Activated CD4-positive, alpha-beta memory T cell treated with anti-CD3 and anti-CD28 coated beads for 36 hours (primary cell): ENCODE measurements at regions of chr11 and their contacts with region 1.

Region 1: GRCh38 chr11:65919146-65920033 is at the start of gene DRAP1:
- DNase-seq: peak; percentile 99
- H3K4me3 Mint-ChIP-seq: peak within 1 kb of the TSS; percentile 90
- H3K27ac Mint-ChIP-seq: peak within 1 kb of the TSS; percentile 84
- H3K4me1 Mint-ChIP-seq: peaks cover 33% of the 10 kb centered on the region
- H3K27me3 Mint-ChIP-seq: no peaks in the 10 kb centered on the region
- total RNA-seq, gene DRAP1: 154 to 169 TPM

Region 2: DNA sequence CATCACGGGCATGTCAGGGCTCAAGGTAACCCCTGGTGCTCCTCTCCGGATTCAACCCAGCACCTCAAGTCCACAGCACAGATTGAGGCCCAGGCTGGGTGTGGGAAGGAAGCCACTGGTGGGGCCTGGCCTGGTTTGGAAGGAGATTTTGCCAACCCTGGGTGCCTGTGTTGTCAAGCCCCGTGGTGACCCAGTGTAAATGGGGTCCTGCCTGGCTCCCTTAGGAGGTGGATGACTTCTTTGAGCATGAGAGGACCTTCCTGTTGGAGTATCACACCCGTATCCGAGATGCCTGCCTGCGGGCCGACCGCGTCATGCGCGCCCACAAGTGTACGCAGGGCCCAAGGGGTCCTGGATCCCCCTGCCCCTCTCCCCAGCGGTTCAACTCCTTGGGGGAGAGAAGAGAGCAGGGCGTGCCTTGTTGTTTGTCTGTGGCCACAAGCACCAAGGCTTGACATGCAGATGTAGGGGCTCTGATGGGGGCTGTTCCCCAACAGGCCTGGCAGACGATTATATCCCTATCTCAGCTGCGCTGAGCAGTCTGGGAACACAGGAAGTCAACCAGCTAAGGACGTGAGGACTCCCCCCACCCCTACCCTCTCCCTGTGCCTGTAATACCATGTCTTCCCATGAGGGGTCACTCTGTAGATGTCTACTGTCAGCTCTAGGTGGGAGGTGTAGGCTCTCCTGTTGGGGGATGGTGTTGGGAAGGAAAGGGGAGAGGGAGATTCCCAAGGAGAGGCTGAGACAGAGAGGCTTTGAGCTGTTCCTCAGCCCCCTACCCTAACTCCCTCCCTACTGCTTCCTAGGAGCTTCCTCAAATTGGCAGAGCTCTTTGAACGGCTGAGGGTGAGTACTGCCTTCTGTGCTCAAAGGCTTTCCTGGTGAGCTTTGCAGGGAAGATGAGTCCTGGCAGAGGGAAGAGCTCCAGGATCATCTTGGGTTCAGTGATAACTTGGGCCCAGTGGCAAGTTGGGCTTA is 68.3 kb before region 1 on chr11:
- CTCF ChIA-PET with region 1: no interaction called
- POLR2A ChIA-PET with region 1: no interaction called
- intact Hi-C with region 1: no loop called
- DNase-seq: peak; percentile 24
- H3K4me3 Mint-ChIP-seq: no peak overlapping the region
- H3K27ac Mint-ChIP-seq: no peak overlapping the region
- H3K4me1 Mint-ChIP-seq: peaks cover 22% of the 10 kb centered on the region
- H3K27me3 Mint-ChIP-seq: no peaks in the 10 kb centered on the region

Region 3: GRCh38 chr11:65900125-65900898 is 19.1 kb before region 1 on chr11 and contains the start of gene FOSL1:
- CTCF ChIA-PET with region 1: interaction called, 3 read pairs
- POLR2A ChIA-PET with region 1: interaction called, 19 read pairs
- intact Hi-C with region 1: loop called (anchors 1 kb)
- DNase-seq: peak; percentile 97
- H3K4me3 Mint-ChIP-seq: peak within 1 kb of the TSS; percentile 75
- H3K27ac Mint-ChIP-seq: peak within 1 kb of the TSS; percentile 80
- H3K4me1 Mint-ChIP-seq: peaks cover 46% of the 10 kb centered on the region
- H3K27me3 Mint-ChIP-seq: peaks cover 4% of the 10 kb centered on the region
- total RNA-seq, gene FOSL1: 17.1 to 17.7 TPM

Region 4: GRCh38 chr11:65961232-65961901 is 42.0 kb after region 1 on chr11 and contains the start of gene SART1:
- CTCF ChIA-PET with region 1: no interaction called
- POLR2A ChIA-PET with region 1: interaction called, 3 read pairs
- intact Hi-C with region 1: loop called (anchors 1 kb)
- DNase-seq: peak; percentile 98
- H3K4me3 Mint-ChIP-seq: peak within 1 kb of the TSS; percentile 95
- H3K27ac Mint-ChIP-seq: peak within 1 kb of the TSS; percentile 94
- H3K4me1 Mint-ChIP-seq: peaks cover 43% of the 10 kb centered on the region
- H3K27me3 Mint-ChIP-seq: no peaks in the 10 kb centered on the region
- total RNA-seq, gene SART1: 59.1 to 60.5 TPM

Region 5: GRCh38 chr11:65988791-65989592 is 69.6 kb after region 1 on chr11:
- CTCF ChIA-PET with region 1: interaction called, 3 read pairs
- POLR2A ChIA-PET with region 1: no interaction called
- intact Hi-C with region 1: loop called (anchors 1 kb)
- DNase-seq: peak; percentile 95
- H3K4me3 Mint-ChIP-seq: no peak overlapping the region
- H3K27ac Mint-ChIP-seq: peak overlapping the region; percentile 74
- H3K4me1 Mint-ChIP-seq: peaks cover 4% of the 10 kb centered on the region
- H3K27me3 Mint-ChIP-seq: no peaks in the 10 kb centered on the region